CD8-positive, alpha-beta T cell (primary cell): ENCODE measurements at regions of chr6 and their contacts with region 1.

Region 1: DNA sequence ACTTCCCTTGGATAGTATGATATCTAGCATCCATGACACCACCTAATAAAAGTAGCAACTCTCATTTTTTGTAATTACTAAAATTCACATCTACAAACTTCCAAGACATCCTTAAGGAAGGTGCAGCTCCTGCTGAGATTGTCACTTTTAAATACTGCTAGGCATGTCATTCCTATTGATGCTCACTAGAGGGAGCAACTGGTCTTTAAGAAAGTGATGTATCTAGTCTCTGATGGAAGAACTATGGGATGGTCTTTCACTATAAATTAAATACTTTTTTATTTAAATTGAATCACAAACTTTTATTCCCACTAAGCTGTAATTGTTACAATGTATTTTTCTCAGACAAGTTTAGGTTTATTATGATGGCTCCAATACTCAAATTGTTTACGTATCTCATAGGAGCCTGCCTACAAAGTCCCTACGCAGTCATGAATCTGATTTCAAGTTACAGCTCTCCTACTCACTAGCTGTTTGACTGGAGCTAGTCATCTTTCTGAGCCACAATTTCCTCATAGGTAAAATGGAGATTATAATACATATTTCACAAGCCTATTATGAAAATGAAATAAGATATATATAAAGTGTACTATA is 8.1 kb upstream of the TSPYL1 start:
- DNase-seq: peak in 2 of 9 experiments; percentile 58 to 71
- ATAC-seq: peak; percentile 97
- H3K4me3 ChIP-seq: no peak overlapping the region
- H3K4me3 Mint-ChIP-seq: no peak overlapping the region
- H3K27ac ChIP-seq: no peak overlapping the region
- H3K27ac Mint-ChIP-seq: no peak overlapping the region
- H3K4me1 ChIP-seq: no peaks in the 10 kb centered on the region
- H3K4me1 Mint-ChIP-seq: peaks cover 2% of the 10 kb centered on the region
- H3K27me3 ChIP-seq: no peaks in the 10 kb centered on the region
- H3K27me3 Mint-ChIP-seq: no peaks in the 10 kb centered on the region
- CTCF ChIP-seq: peak; percentile 99

Region 2: DNA sequence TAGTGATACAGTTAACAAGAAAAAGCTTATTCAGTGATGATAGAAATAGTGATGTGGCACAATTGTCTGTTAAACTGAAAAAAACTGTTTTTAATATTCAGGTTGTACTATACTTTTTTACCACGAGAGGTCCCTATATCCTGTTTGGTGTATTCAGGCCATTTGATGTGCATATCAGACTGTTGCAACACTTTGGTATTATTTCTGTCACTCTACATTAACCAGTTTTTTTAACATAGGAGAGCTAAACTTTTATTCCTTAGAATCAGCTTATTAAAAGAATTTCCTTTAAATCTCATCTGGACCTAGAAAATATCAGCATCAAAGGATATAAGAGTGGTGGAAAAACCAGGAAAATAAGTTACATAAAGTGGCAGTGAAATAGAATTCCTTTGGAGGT is 70.7 kb before region 1 on chr6:
- CTCF ChIA-PET with region 1: interaction called, 4 read pairs
- POLR2A ChIA-PET with region 1: no interaction called
- intact Hi-C with region 1: loop called in 1 of 2 experiments (anchors 2 kb)
- DNase-seq: peak in 2 of 9 experiments; percentile 52 to 59
- ATAC-seq: peak; percentile 87
- H3K4me3 ChIP-seq: no peak overlapping the region
- H3K4me3 Mint-ChIP-seq: no peak overlapping the region
- H3K27ac ChIP-seq: no peak overlapping the region
- H3K27ac Mint-ChIP-seq: peak overlapping the region; percentile 27
- H3K4me1 ChIP-seq: no peaks in the 10 kb centered on the region
- H3K4me1 Mint-ChIP-seq: peaks cover 5% of the 10 kb centered on the region
- H3K27me3 ChIP-seq: no peaks in the 10 kb centered on the region
- H3K27me3 Mint-ChIP-seq: no peaks in the 10 kb centered on the region
- CTCF ChIP-seq: peak; percentile 69

Region 3: GRCh38 chr6:116268589-116269293 is 19.0 kb before region 1 on chr6:
- CTCF ChIA-PET with region 1: interaction called, 13 read pairs
- POLR2A ChIA-PET with region 1: no interaction called
- intact Hi-C with region 1: no loop called
- DNase-seq: peak in 2 of 9 experiments; percentile 69 to 79
- ATAC-seq: peak; percentile 82
- H3K4me3 ChIP-seq: no peak overlapping the region
- H3K4me3 Mint-ChIP-seq: no peak overlapping the region
- H3K27ac ChIP-seq: no peak overlapping the region
- H3K27ac Mint-ChIP-seq: peak overlapping the region; percentile 9
- H3K4me1 ChIP-seq: peaks cover 17% of the 10 kb centered on the region
- H3K4me1 Mint-ChIP-seq: peaks cover 42% of the 10 kb centered on the region
- H3K27me3 ChIP-seq: no peaks in the 10 kb centered on the region
- H3K27me3 Mint-ChIP-seq: no peaks in the 10 kb centered on the region
- CTCF ChIP-seq: peak; percentile 82

Region 4: GRCh38 chr6:116298973-116299372 is 11.2 kb after region 1 on chr6:
- CTCF ChIA-PET with region 1: interaction called, 10 read pairs
- POLR2A ChIA-PET with region 1: no interaction called
- intact Hi-C with region 1: no loop called
- DNase-seq: no peak
- ATAC-seq: no peak
- H3K4me3 ChIP-seq: no peak overlapping the region
- H3K4me3 Mint-ChIP-seq: no peak overlapping the region
- H3K27ac ChIP-seq: no peak overlapping the region
- H3K27ac Mint-ChIP-seq: no peak overlapping the region
- H3K4me1 ChIP-seq: no peaks in the 10 kb centered on the region
- H3K4me1 Mint-ChIP-seq: no peaks in the 10 kb centered on the region
- H3K27me3 ChIP-seq: no peaks in the 10 kb centered on the region
- H3K27me3 Mint-ChIP-seq: no peaks in the 10 kb centered on the region
- CTCF ChIP-seq: no peak

Region 5: DNA sequence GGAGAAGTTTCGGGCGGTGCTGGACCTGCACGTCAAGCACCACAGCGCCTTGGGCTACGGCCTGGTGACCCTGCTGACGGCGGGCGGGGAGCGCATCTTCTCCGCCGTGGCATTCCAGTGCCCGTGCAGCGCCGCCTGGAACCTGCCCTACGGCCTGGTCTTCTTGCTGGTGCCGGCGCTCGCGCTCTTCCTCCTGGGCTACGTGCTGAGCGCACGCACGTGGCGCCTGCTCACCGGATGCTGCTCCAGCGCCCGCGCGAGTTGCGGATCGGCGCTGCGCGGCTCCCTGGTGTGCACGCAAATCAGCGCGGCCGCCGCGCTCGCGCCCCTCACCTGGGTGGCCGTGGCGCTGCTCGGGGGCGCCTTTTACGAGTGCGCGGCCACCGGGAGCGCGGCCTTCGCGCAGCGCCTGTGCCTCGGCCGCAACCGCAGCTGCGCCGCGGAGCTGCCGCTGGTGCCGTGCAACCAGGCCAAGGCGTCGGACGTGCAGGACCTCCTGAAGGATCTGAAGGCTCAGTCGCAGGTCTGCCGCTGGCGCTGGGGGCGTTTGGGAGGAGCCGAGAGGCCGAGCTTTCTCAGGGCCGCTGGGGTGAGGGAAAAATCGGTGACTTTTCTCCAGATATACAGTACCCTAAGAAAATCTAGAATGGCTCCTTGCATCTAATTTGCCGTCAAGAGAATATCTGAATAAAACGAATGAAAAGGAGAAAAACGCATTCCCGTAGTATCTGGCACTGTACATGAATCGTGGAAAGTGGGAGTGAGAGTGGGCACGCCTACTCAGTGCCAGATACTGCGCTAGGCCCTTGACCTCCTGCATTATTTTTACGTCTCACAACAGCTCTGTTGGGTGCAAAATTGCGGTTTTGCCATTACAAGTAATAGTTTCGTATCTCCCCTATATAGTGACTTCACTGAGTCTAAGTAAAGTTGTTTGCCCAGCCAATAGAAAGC is 174.4 kb after region 1 on chr6:
- CTCF ChIA-PET with region 1: interaction called, 3 read pairs
- POLR2A ChIA-PET with region 1: no interaction called
- intact Hi-C with region 1: loop called in 1 of 2 experiments (anchors 5 kb)
- DNase-seq: peak; percentile 4 to 82 (median 51)
- ATAC-seq: peak; percentile 91
- H3K4me3 ChIP-seq: peak overlapping the region; percentile 44 to 54
- H3K4me3 Mint-ChIP-seq: peak overlapping the region; percentile 79
- H3K27ac ChIP-seq: no peak overlapping the region
- H3K27ac Mint-ChIP-seq: peak overlapping the region; percentile 24
- H3K4me1 ChIP-seq: peaks cover 14% of the 10 kb centered on the region
- H3K4me1 Mint-ChIP-seq: peaks cover 30% of the 10 kb centered on the region
- H3K27me3 ChIP-seq: no peaks in the 10 kb centered on the region
- H3K27me3 Mint-ChIP-seq: peaks cover 10% of the 10 kb centered on the region
- CTCF ChIP-seq: no peak

Region 6: DNA sequence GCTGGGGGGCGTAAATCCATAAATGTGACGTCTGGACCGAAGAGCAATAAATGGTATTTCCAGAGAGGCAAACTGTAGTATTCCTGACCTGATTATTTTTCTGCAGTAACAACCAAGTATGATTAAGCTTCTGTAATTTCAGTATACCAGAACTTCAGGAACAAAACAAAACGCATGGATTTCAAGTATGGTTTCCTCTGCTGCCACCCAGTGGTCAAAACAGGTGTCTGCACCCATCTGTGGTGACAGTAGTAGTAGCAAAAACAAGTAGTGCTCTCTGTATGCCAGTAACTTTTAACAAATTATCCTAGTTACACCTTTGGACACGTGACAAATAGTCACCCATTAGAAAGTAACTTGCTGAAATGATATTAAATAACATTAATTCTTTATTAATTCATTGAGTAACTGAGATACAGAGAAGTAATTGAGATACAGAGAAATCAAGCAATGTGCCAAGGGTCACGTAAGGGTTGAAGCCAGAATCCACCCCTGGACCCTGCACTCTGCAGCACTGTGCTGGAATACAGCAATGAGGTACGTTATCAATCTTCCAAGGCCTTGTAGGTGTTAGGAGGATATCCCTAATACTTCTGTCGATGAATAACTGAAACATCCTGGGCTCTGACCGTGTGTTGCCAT is 273.7 kb after region 1 on chr6:
- CTCF ChIA-PET with region 1: interaction called, 12 read pairs
- POLR2A ChIA-PET with region 1: no interaction called
- intact Hi-C with region 1: loop called in 1 of 2 experiments (anchors 1 kb)
- DNase-seq: peak; percentile 29 to 77 (median 67)
- ATAC-seq: peak; percentile 93
- H3K4me3 ChIP-seq: no peak overlapping the region
- H3K4me3 Mint-ChIP-seq: no peak overlapping the region
- H3K27ac ChIP-seq: no peak overlapping the region
- H3K27ac Mint-ChIP-seq: no peak overlapping the region
- H3K4me1 ChIP-seq: no peaks in the 10 kb centered on the region
- H3K4me1 Mint-ChIP-seq: peaks cover 3% of the 10 kb centered on the region
- H3K27me3 ChIP-seq: no peaks in the 10 kb centered on the region
- H3K27me3 Mint-ChIP-seq: peaks cover 9% of the 10 kb centered on the region
- CTCF ChIP-seq: peak; percentile 95